ENCODE measurements at regions of chr11 and their contacts with region 1.

Region 1: GRCh38 chr11:114077482-114078305 is 18.2 kb downstream of the ZBTB16 start:
- DNase-seq: peak; percentile 75 to 77
- H3K4me3 ChIP-seq: peak overlapping the region; percentile 25
- H3K4me3 Mint-ChIP-seq: peak overlapping the region; percentile 72
- H3K27ac Mint-ChIP-seq: peak overlapping the region; percentile 90
- H3K4me1 ChIP-seq: peaks cover 66% of the 10 kb centered on the region
- H3K4me1 Mint-ChIP-seq: peaks cover 57% of the 10 kb centered on the region
- H3K27me3 ChIP-seq: no peaks in the 10 kb centered on the region
- H3K27me3 Mint-ChIP-seq: no peaks in the 10 kb centered on the region
- CTCF ChIP-seq: no peak

Region 2: DNA sequence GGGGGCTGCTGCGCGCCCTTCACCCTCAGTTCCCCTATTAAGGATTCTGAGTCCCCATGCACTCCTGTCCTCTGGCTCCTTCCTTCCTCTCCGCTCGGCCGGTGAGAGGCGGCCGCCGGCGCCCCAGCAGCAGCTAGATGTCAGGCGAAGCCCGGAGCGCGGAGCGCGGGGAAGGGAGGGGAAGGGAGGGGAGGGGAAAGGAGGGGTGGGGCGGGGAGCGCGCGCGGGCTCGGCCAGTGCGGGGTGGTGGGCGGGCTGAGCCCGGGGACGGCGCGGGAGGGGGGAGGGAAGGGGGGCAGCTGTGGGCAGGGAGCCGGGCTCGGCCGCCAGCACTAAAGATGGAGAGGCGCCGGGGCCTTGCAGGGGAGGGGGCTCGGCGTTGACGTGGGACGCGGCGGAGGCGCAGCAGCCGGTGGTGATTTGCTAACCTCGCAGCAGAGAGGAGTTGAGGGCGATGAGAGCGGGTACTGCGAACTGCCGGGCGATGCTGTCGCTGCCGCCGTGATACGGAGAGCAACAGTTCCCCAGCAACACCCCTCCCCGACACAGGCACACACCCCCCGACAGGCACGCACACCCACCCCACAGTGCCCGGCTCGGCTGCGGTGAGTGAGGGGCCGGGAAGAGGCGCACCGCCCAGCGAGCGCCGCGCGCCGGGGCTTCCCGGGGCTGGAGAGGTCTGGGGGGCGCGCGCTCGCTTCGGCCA is 18.3 kb before region 1 on chr11 and contains the start of gene ZBTB16:
- CTCF ChIA-PET with region 1: interaction called, 20 read pairs
- POLR2A ChIA-PET with region 1: no interaction called
- intact Hi-C with region 1: loop called (anchors 1 kb)
- DNase-seq: peak; percentile 83 to 88
- H3K4me3 ChIP-seq: peak within 1 kb of the TSS; percentile 78
- H3K4me3 Mint-ChIP-seq: peak within 1 kb of the TSS; percentile 86
- H3K27ac Mint-ChIP-seq: peak within 1 kb of the TSS; percentile 74
- H3K4me1 ChIP-seq: peaks cover 10% of the 10 kb centered on the region; the same call in 1 of the 2 replicates
- H3K4me1 Mint-ChIP-seq: peaks cover 16% of the 10 kb centered on the region
- H3K27me3 ChIP-seq: no peaks in the 10 kb centered on the region
- H3K27me3 Mint-ChIP-seq: peaks cover 11% of the 10 kb centered on the region
- CTCF ChIP-seq: peak in 1 of 2 experiments; percentile 78
- total RNA-seq, gene ZBTB16: 10.6 and 12.7 TPM in 2 replicates

Region 3: GRCh38 chr11:114099392-114100178 is 21.9 kb after region 1 on chr11:
- CTCF ChIA-PET with region 1: interaction called, 16 read pairs
- POLR2A ChIA-PET with region 1: interaction called, 7 read pairs
- intact Hi-C with region 1: loop called (anchors 1 kb)
- DNase-seq: peak in 1 of 2 experiments; percentile 38
- H3K4me3 ChIP-seq: no peak overlapping the region
- H3K4me3 Mint-ChIP-seq: peak overlapping the region; percentile 2
- H3K27ac Mint-ChIP-seq: peak overlapping the region; percentile 68
- H3K4me1 ChIP-seq: peaks cover 37% of the 10 kb centered on the region
- H3K4me1 Mint-ChIP-seq: peaks cover 59% of the 10 kb centered on the region
- H3K27me3 ChIP-seq: no peaks in the 10 kb centered on the region
- H3K27me3 Mint-ChIP-seq: no peaks in the 10 kb centered on the region
- CTCF ChIP-seq: no peak

Region 4: GRCh38 chr11:114148013-114148382 is 70.3 kb after region 1 on chr11:
- CTCF ChIA-PET with region 1: interaction called, 12 read pairs
- POLR2A ChIA-PET with region 1: no interaction called
- intact Hi-C with region 1: no loop called
- DNase-seq: peak in 1 of 2 experiments; percentile 19
- H3K4me3 ChIP-seq: no peak overlapping the region
- H3K4me3 Mint-ChIP-seq: no peak overlapping the region
- H3K27ac Mint-ChIP-seq: no peak overlapping the region
- H3K4me1 ChIP-seq: peaks cover 12% of the 10 kb centered on the region
- H3K4me1 Mint-ChIP-seq: peaks cover 7% of the 10 kb centered on the region
- H3K27me3 ChIP-seq: no peaks in the 10 kb centered on the region
- H3K27me3 Mint-ChIP-seq: no peaks in the 10 kb centered on the region
- CTCF ChIP-seq: no peak

Region 5: GRCh38 chr11:114180301-114181055 is 102.8 kb after region 1 on chr11:
- CTCF ChIA-PET with region 1: interaction called, 8 read pairs
- POLR2A ChIA-PET with region 1: no interaction called
- intact Hi-C with region 1: loop called (anchors 1 kb)
- DNase-seq: peak; percentile 64 to 73
- H3K4me3 ChIP-seq: no peak overlapping the region
- H3K4me3 Mint-ChIP-seq: no peak overlapping the region
- H3K27ac Mint-ChIP-seq: no peak overlapping the region
- H3K4me1 ChIP-seq: peaks cover 22% of the 10 kb centered on the region
- H3K4me1 Mint-ChIP-seq: peaks cover 25% of the 10 kb centered on the region
- H3K27me3 ChIP-seq: no peaks in the 10 kb centered on the region
- H3K27me3 Mint-ChIP-seq: no peaks in the 10 kb centered on the region
- CTCF ChIP-seq: peak; percentile 80 to 91

Region 6: DNA sequence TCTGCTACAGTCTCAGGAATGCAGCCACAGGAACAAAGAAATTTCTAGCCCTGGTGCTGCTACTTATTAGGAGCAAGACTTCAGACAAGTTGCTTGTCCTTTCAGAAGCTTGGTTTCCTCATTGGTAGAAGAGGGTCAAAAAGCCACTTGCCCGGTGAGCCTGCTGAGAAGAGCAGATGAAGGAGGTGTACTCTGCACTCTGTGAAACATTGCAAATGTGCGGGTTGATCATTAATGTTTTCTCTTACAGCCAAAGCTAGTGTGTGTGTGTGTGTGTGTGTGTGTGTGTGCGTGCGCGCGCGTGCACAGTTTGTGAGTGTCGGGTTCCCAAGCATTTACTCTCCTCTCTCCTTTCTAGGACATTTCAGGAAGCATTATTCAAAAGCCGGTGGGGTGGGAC is 132.2 kb after region 1 on chr11:
- CTCF ChIA-PET with region 1: interaction called, 6 read pairs
- POLR2A ChIA-PET with region 1: interaction called, 5 read pairs
- intact Hi-C with region 1: loop called (anchors 1 kb)
- DNase-seq: peak; percentile 90 to 93
- H3K4me3 ChIP-seq: 0 out of 2 replicates have a peak overlapping the region, but pooled peaks have one; percentile 9
- H3K4me3 Mint-ChIP-seq: peak overlapping the region; percentile 68
- H3K27ac Mint-ChIP-seq: peak overlapping the region; percentile 71
- H3K4me1 ChIP-seq: peaks cover 53% of the 10 kb centered on the region
- H3K4me1 Mint-ChIP-seq: peaks cover 34% of the 10 kb centered on the region
- H3K27me3 ChIP-seq: no peaks in the 10 kb centered on the region
- H3K27me3 Mint-ChIP-seq: no peaks in the 10 kb centered on the region
- CTCF ChIP-seq: no peak

Measured in Caco-2 (cell line).